Dorsolateral prefrontal cortex (tissue), 120 donors: ENCODE measurements at regions of chr2 and their contacts with region 1.

Region 1: DNA sequence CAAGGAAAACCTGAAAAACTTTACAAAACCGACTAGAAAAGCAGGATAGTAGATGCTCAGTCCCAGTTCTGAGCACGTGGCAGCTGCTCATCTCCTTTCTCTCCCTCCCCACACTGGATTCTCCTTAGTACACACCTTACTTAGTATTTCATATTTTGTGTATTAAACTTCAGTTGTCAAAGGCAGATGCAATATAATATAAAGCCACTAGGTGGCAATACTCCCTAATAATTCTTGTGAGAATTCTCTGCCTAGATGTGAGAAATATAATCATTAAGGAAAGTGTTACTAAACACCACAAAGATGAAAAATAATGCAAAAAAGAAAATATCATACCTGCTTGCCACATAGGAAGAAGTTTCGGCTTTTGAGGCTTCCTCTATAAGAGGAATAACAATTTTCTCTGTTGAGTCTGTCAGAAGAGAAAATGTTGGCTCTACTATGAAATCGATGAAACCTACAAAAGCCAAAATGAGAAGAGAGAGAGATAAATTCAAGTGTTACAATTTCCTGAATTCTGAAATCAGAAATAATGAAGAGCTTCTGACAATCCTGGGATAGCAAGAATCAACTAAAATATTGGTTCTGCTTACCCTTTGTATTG is 200.6 kb downstream of the PPP1R1C start:
- DNase-seq: no peak
- H3K4me3 ChIP-seq: no peak overlapping the region
- H3K27ac ChIP-seq: peak overlapping the region in 30 of 59 donors; percentile 1 to 76 (median 37)
- H3K27me3 ChIP-seq: no peaks in the 10 kb centered on the region
- CTCF ChIP-seq: peak; percentile 78 to 98 (median 91)

Region 2: GRCh38 chr2:182522405-182522896 is 336.2 kb after region 1 on chr2:
- intact Hi-C with region 1: loop called in 1 of 2 experiments (anchors 10 kb)
- DNase-seq: peak in 2 of 10 donors; percentile 32 to 57
- H3K4me3 ChIP-seq: peak overlapping the region; percentile 2 to 72 (median 54)
- H3K27ac ChIP-seq: peak overlapping the region in 57 of 59 donors; percentile 19 to 88 (median 79)
- H3K27me3 ChIP-seq: no peaks in the 10 kb centered on the region
- CTCF ChIP-seq: no peak

Region 3: DNA sequence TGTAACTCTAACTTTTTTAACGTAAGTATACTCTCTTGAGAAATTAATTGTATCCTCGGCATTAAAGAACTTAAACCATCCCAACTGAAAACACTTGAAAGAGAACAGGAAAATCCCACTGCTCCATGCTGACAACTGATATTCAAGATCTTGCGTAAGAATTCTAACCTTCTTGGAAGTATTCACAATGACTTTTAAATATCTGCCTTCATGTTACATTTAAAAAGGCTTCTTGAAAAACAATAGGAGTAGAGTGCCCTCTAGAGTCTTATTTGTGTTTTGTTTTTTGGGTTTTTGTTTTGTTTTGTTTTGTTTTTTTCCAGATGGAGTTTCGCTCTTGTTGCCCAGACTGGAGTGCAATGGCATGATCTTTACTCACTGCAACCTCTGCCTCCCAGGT is 464.5 kb after region 1 on chr2:
- intact Hi-C with region 1: loop called (anchors 1 to 2 kb)
- DNase-seq: no peak
- H3K4me3 ChIP-seq: peak overlapping the region in 12 of 59 donors; percentile 3 to 48 (median 21)
- H3K27ac ChIP-seq: peak overlapping the region in 3 of 59 donors; percentile 30 to 62 (median 43)
- H3K27me3 ChIP-seq: peaks cover 0 to 1% (median 0%) of the 10 kb centered on the region in 45 donors
- CTCF ChIP-seq: peak; percentile 49 to 88 (median 72)